PC-3 (cell line): ENCODE measurements at regions of chr20 and their contacts with region 1.

Region 1: GRCh38 chr20:9068851-9069663 is at the start of gene PLCB4:
- DNase-seq: peak; percentile 89
- ATAC-seq: peak; percentile 53
- H3K4me3 ChIP-seq: peak within 1 kb of the TSS; percentile 91
- H3K27ac ChIP-seq: peak within 1 kb of the TSS; percentile 42
- H3K4me1 ChIP-seq: peaks cover 43% of the 10 kb centered on the region
- H3K27me3 ChIP-seq: no peaks in the 10 kb centered on the region
- CTCF ChIP-seq: no peak
- total RNA-seq, gene PLCB4: 16.9 and 25.4 TPM in 2 replicates

Region 2: GRCh38 chr20:8790442-8791074 is 278.5 kb before region 1 on chr20:
- CTCF ChIA-PET with region 1: interaction called, 6 read pairs
- POLR2A ChIA-PET with region 1: no interaction called
- intact Hi-C with region 1: loop called (anchors 2 kb)
- DNase-seq: peak; percentile 81
- ATAC-seq: peak; percentile 70
- H3K4me3 ChIP-seq: no peak overlapping the region
- H3K27ac ChIP-seq: no peak overlapping the region
- H3K4me1 ChIP-seq: no peaks in the 10 kb centered on the region
- H3K27me3 ChIP-seq: no peaks in the 10 kb centered on the region
- CTCF ChIP-seq: peak; percentile 98

Region 3: GRCh38 chr20:8860011-8860495 is 209.0 kb before region 1 on chr20:
- CTCF ChIA-PET with region 1: interaction called, 5 read pairs
- POLR2A ChIA-PET with region 1: interaction called, 3 read pairs
- intact Hi-C with region 1: loop called (anchors 1 kb)
- DNase-seq: peak; percentile 96
- ATAC-seq: peak; percentile 91
- H3K4me3 ChIP-seq: peak overlapping the region; percentile 49; the same call in 1 of the 2 replicates
- H3K27ac ChIP-seq: peak overlapping the region; percentile 87
- H3K4me1 ChIP-seq: peaks cover 36% of the 10 kb centered on the region
- H3K27me3 ChIP-seq: no peaks in the 10 kb centered on the region
- CTCF ChIP-seq: no peak

Region 4: DNA sequence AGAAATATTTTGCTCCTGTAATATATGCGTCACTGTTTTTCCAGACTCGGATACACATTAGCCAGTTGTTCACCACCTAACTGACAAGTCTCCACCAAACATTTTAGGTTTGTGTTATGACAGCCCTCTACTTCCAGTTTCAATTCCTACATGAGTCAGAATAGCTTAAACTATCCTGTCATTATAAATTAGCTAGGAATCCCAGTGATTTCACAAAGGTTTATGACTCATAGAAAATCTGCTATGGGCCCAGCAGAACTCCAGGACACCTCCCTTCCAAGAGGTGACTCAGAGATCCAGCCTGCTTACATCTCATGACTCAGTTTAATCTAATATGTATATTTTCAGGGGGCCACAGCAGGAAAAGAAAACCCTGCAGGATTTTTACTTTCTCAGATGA is 17.5 kb before region 1 on chr20:
- CTCF ChIA-PET with region 1: interaction called, 3 read pairs
- POLR2A ChIA-PET with region 1: no interaction called
- intact Hi-C with region 1: loop called (anchors 1 kb)
- DNase-seq: peak; percentile 99
- ATAC-seq: peak; percentile 96
- H3K4me3 ChIP-seq: peak overlapping the region; percentile 44
- H3K27ac ChIP-seq: peak overlapping the region; percentile 79
- H3K4me1 ChIP-seq: peaks cover 30% of the 10 kb centered on the region
- H3K27me3 ChIP-seq: no peaks in the 10 kb centered on the region
- CTCF ChIP-seq: no peak

Region 5: DNA sequence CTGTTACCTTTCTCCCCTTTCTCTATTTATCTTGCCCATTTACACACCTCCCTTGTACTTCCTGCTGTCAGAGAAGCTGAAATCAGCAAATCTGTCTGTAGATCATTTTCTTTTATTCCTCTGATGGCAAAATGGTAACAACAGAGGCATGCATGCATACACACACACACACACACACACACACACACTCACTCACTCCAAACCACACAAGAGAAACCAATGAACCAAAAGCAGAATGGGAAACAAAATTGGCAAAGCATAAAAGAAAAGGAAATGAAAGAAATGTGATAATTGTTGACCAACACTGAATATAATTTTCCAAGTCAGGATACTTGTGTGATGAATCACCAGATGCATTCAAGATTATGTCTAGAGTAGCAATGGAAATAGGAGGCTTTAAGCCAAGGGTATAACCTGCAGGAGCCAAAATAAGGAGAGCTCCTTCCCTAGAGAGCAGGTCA is 172.2 kb after region 1 on chr20:
- CTCF ChIA-PET with region 1: no interaction called
- POLR2A ChIA-PET with region 1: no interaction called
- intact Hi-C with region 1: loop called (anchors 5 kb)
- DNase-seq: peak; percentile 88
- ATAC-seq: peak; percentile 88
- H3K4me3 ChIP-seq: no peak overlapping the region
- H3K27ac ChIP-seq: peak overlapping the region; percentile 2; the same call in 1 of the 2 replicates
- H3K4me1 ChIP-seq: peaks cover 24% of the 10 kb centered on the region
- H3K27me3 ChIP-seq: no peaks in the 10 kb centered on the region
- CTCF ChIP-seq: no peak

Region 6: GRCh38 chr20:9359561-9360308 is 290.7 kb after region 1 on chr20:
- CTCF ChIA-PET with region 1: interaction called, 4 read pairs
- POLR2A ChIA-PET with region 1: interaction called, 5 read pairs
- intact Hi-C with region 1: loop called (anchors 1 kb)
- DNase-seq: peak; percentile 78
- ATAC-seq: peak; percentile 78
- H3K4me3 ChIP-seq: no peak overlapping the region
- H3K27ac ChIP-seq: no peak overlapping the region
- H3K4me1 ChIP-seq: no peaks in the 10 kb centered on the region
- H3K27me3 ChIP-seq: no peaks in the 10 kb centered on the region
- CTCF ChIP-seq: peak; percentile 85